Sigmoid colon (tissue), 7 donors: ENCODE measurements at regions of chr4 and their contacts with region 1.

Region 1: DNA sequence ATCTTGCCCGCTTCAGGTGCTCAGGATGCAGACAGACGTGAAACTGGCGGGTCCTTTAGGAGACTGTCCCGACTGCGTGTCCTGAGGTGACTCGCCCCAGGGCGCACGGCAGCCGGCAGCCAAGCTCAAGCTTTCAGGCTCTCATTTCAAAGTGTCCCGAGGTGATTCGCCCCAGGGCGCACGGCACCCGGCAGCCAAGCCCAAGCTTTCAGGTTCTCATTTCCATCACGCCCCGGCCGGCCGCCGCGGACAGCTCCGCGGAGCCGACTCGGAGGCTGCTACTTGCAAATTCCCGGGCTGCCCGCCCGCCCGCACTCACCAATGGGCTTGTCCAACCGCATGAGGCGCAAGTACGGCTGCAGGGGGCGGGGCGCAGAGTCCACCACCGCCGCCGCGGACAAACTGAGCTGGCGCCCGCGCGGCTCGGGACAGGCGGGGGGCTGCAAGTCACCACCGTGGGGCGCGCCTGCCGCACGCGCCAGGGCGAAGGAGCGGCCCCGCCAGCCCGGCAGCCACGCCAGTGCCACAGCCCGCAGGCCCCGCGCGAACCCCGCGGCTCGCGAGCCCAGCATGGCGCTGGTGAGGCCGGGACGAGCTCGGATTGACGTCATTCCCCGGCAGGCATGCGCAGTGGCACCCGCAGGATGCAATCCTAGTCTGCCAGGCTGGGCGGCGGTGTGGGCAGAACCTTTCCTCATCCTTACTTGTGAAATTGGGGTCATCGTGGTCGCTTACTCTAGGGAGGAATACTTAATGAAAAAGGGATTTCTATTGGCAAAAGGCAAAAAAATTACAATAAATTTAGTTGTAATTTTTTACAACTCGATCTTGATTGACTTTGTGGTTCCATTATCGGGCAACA is at the start of gene COQ2:
- DNase-seq: peak; percentile 98
- H3K4me3 ChIP-seq: peak within 1 kb of the TSS; percentile 36 to 70 (median 68)
- H3K27ac ChIP-seq: peak within 1 kb of the TSS; percentile 90 to 93 (median 92)
- H3K4me1 ChIP-seq: peaks cover 0 to 16% (median 12%) of the 10 kb centered on the region in 4 donors
- H3K27me3 ChIP-seq: no peaks in the 10 kb centered on the region
- CTCF ChIP-seq: peak in 2 of 4 experiments; percentile 11 to 34
- EP300 ChIP-seq: no peak
- POLR2A ChIP-seq: peak; percentile 50 to 75
- total RNA-seq, gene COQ2: 5.6 to 7.8 (median 7.2) TPM

Region 2: DNA sequence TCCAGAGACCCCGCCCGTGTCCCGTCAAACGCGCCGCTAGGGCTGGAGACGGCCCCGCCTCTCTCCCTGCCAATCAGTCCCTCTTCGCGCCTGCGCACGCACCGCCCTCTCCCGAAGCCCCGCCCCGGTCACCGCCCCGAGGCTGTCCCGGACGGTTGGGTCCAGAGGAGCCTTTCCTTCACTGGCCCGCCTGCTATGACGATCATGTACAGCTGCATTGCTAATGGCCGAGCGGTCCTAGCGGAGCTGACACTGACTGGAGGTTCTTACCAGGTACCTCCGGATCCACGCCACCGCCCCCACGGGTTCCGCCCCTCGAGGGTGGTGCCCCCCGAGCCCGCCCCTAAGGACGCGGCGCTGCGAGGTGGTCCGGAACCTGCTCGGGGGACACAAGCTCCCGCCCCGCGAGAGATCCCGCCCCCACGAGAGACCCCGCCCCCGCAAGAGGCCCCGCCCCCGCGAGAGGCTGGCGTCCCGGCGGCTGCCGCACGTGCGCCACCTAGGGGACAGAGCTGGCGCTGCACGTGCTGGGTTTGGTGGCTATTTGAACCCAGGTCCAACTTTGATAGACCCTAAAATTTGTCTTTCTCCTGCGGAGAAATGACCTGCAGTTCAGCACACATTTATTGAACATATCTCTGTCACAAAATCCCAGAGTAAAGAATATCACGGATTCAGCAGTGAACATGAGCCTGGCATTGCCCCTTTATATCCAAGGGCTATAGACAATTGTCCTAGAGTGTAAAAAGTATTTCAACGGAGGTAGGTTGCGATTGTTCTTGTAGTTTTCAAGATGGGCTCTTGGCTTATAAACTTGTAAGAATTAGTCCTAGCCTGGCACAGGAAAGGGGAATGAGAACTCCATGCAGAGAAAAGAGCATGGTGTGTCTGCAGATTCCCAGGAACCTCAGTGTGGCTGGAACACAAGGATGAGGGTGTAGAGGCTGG is 999.3 kb before region 1 on chr4:
- intact Hi-C with region 1: loop called (anchors 2 kb)
- DNase-seq: peak; percentile 100
- H3K4me3 ChIP-seq: peak overlapping the region; percentile 24 to 50 (median 44)
- H3K27ac ChIP-seq: peak overlapping the region; percentile 63 to 76 (median 70)
- H3K4me1 ChIP-seq: peaks cover 0 to 5% (median 5%) of the 10 kb centered on the region in 4 donors
- H3K27me3 ChIP-seq: no peaks in the 10 kb centered on the region
- CTCF ChIP-seq: peak; percentile 65 to 98 (median 81)
- EP300 ChIP-seq: no peak
- POLR2A ChIP-seq: no peak

Region 3: DNA sequence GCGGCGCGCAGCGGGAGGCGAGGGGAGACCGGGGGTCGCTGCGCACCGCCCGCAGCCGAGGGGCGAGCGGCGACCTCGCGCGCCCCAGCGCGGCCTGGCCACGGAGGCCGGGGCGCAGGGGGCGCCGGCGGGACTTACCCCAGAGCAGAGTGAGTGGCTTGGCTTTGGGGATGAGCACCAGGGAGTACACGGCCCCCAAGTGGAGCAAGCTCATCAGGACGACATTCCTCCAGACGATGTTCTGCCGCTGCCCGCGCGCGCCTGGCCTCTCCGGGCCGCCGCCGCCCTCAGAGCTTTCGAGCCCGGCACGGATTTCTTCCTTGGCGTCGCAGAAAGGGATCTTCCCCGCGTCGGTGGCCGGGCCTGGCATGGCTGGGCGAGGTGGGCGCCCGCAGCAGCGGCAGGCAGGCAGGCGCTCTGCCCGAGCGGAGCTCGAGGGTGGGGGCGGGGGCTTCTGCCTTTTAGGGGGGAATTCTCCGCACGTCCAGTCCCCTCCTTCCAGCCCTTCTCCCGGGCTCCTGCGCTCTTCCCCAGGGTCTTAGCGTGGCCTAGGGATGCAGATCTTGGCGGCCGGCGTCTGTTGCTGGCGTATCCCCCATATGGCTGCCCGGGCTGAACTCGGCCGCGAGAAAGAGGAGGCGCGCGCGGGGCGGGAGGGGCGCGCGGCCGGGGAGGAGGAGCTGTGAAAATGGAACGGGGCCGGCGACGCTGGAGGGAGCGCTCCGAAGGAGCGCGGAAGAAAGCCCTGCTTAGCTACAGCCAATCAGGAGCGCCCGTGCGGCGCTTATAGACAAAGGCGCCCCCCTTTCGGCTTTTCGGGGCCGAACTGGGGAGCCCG is 486.0 kb before region 1 on chr4 and contains the start of gene SCD5:
- intact Hi-C with region 1: loop called (anchors 5 kb)
- DNase-seq: peak; percentile 91
- H3K4me3 ChIP-seq: peak within 1 kb of the TSS; percentile 78 to 93 (median 84)
- H3K27ac ChIP-seq: peak within 1 kb of the TSS; percentile 81 to 86 (median 82)
- H3K4me1 ChIP-seq: peaks cover 0 to 22% (median 16%) of the 10 kb centered on the region in 4 donors
- H3K27me3 ChIP-seq: no peaks in the 10 kb centered on the region
- CTCF ChIP-seq: no peak
- EP300 ChIP-seq: no peak
- POLR2A ChIP-seq: no peak
- total RNA-seq, gene SCD5: 27.3 to 30.7 (median 29.0) TPM

Region 4: GRCh38 chr4:83034630-83035494 is 249.6 kb before region 1 on chr4 and contains the start of gene COPS4:
- intact Hi-C with region 1: loop called (anchors 10 kb)
- DNase-seq: peak; percentile 99
- H3K4me3 ChIP-seq: peak within 1 kb of the TSS; percentile 71 to 80 (median 74)
- H3K27ac ChIP-seq: peak within 1 kb of the TSS; percentile 89 to 93 (median 91)
- H3K4me1 ChIP-seq: peaks cover 0 to 29% (median 20%) of the 10 kb centered on the region in 4 donors
- H3K27me3 ChIP-seq: no peaks in the 10 kb centered on the region
- CTCF ChIP-seq: peak; percentile 41 to 54 (median 50)
- EP300 ChIP-seq: peak in 2 of 4 donors; percentile 18 to 22
- POLR2A ChIP-seq: peak; percentile 33 to 69
- total RNA-seq, gene COPS4: 33.0 to 64.6 (median 53.8) TPM

Region 5: GRCh38 chr4:83455281-83456129 is 171.1 kb after region 1 on chr4 and contains the starts of genes HELQ and MRPS18C:
- intact Hi-C with region 1: loop called (anchors 5 kb)
- DNase-seq: peak; percentile 99
- H3K4me3 ChIP-seq: peak within 1 kb of the TSS; percentile 80 to 86 (median 84)
- H3K27ac ChIP-seq: peak within 1 kb of the TSS; percentile 96 to 99 (median 98)
- H3K4me1 ChIP-seq: peaks cover 0 to 32% (median 22%) of the 10 kb centered on the region in 4 donors
- H3K27me3 ChIP-seq: no peaks in the 10 kb centered on the region
- CTCF ChIP-seq: peak in 2 of 4 experiments; percentile 13 to 48
- EP300 ChIP-seq: peak in 1 of 4 donors; percentile 20
- POLR2A ChIP-seq: peak; percentile 45 to 66
- total RNA-seq, gene HELQ: 11.8 to 21.8 (median 18.9) TPM
- total RNA-seq, gene MRPS18C: 8.3 to 36.2 (median 17.4) TPM